Mammary epithelial cell (primary cell): ENCODE measurements at regions of chr18 and their contacts with region 1.

Region 1: DNA sequence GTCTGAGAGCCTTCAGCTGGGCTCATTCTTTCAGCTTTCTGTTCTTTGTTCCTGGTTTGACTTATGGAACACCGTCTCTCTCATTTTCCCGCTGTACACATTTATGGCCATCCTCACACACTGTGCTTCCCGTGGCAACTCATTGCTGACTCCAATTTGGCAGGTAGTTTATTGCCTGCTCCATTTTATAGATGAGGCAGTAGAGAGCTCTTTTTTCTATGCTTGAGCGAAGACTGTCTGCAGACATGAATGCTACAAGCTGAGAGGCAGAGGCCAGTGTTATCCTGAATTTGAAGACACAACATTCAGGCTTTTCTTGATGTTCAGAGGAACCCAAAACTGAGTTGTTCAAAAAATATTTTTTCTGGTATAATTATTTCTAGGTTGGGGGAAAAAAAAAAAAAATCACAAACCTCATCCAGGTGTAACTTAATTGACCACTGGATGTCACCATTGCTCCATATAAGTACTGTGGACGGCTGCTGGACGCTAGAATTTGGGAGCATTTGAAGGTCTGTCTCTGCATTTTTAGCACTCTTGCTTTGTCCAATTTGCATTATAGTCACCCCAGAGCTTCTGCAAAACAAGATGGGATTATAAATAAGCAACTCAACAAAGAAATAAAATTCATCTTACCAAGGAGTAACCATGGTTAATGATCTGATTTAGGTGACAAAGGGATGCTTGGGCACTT is 83.5 kb downstream of the HRH4 start:
- DNase-seq: peak; percentile 38
- H3K4me3 ChIP-seq: no peak overlapping the region
- H3K27ac ChIP-seq: no peak overlapping the region
- H3K4me1 ChIP-seq: peaks cover 4% of the 10 kb centered on the region
- H3K27me3 ChIP-seq: no peaks in the 10 kb centered on the region
- CTCF ChIP-seq: peak; percentile 51 to 56

Region 2: GRCh38 chr18:24488824-24489493 is 55.0 kb before region 1 on chr18:
- CTCF ChIA-PET with region 1: no interaction called
- dilution Hi-C with region 1: no loop called
- in situ Hi-C with region 1: no loop called
- intact Hi-C with region 1: loop called (anchors 1 kb)
- DNase-seq: peak; percentile 16
- H3K4me3 ChIP-seq: no peak overlapping the region
- H3K27ac ChIP-seq: no peak overlapping the region
- H3K4me1 ChIP-seq: no peaks in the 10 kb centered on the region
- H3K27me3 ChIP-seq: peaks cover 2% of the 10 kb centered on the region
- CTCF ChIP-seq: peak; percentile 66 to 83

Region 3: DNA sequence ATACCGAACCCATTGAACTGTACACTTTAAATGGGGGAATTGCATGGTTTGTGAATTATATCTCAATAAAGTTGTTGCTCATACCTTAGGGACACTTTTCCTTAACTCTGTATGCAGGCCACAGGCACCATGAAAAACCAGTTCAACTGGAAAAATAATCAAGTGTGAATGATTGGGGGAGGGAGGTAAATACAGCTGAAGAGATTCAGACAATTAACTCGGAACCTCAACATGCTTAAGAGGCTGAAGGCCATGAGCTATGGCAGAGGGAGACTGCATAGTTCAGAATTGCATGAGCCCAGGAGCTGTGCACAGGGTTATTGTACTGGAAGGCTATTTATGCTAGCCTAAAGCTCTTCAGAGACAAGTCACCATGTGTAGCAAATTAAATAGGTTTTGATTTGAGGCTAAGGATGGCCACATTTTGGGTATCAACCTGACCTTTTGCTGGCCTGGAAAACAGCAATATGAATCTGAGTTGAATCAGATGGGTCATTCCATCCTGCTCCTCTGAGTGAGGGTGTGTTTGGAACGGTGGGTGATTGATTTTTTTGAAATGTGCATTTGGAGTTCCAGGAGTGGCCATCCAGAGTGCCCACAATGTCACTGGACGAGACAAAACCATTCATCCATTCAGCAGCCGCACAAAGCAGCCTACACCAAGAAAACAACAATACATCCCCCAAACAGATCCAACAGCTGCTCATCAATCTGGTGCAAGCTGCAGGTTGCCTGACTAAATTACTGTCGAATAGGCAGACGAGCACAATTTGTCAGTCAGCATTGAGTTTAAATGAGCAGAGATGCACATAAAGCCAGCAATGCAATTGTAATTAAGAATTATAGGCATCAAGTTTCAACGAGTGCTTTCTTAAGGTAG is 41.1 kb before region 1 on chr18:
- CTCF ChIA-PET with region 1: no interaction called
- dilution Hi-C with region 1: no loop called
- in situ Hi-C with region 1: no loop called
- intact Hi-C with region 1: no loop called
- DNase-seq: no peak
- H3K4me3 ChIP-seq: no peak overlapping the region
- H3K27ac ChIP-seq: no peak overlapping the region
- H3K4me1 ChIP-seq: no peaks in the 10 kb centered on the region
- H3K27me3 ChIP-seq: no peaks in the 10 kb centered on the region
- CTCF ChIP-seq: no peak

Region 4: DNA sequence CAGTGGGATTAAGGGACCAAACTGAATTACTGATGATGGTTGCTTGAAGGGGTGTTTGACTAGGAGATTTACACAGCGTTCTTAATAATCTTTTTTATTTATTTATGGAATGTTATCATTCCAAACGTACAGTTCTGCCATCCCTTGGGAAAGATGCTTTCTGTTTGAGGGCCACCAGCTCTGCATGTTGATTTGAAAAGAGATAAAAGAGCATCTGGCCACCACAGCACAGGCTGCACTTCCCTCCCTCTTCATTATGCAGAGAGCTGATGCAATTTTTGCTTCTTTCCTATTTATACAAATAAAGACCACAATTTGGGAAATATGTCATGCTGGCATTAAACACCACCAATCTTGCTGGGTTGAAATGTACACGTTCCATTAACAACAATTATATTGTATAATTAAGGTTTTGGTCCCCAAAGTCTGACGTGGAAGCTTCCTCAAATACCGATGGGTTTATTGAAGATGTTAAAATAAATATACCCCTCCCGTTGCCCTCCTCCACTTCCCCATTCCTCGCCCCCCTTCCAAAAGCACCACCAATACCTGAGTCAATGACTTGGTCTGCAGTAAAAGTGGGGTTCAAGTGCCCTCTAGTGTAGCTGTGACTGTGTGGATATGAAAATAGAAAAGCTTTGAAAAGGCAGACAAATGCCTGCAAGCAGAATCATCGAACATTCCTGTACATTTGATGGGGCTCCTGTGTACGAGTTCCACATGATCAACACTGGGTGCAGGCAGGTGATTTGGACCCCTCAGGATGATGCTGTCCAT is 128.4 kb after region 1 on chr18:
- CTCF ChIA-PET with region 1: no interaction called
- dilution Hi-C with region 1: no loop called
- in situ Hi-C with region 1: no loop called
- intact Hi-C with region 1: loop called (anchors 5 kb)
- DNase-seq: no peak
- H3K4me3 ChIP-seq: no peak overlapping the region
- H3K27ac ChIP-seq: no peak overlapping the region
- H3K4me1 ChIP-seq: no peaks in the 10 kb centered on the region
- H3K27me3 ChIP-seq: no peaks in the 10 kb centered on the region
- CTCF ChIP-seq: peak in 1 of 2 donors; percentile 14

Region 5: GRCh38 chr18:24734058-24734457 is 190.1 kb after region 1 on chr18:
- CTCF ChIA-PET with region 1: interaction called, 7 read pairs
- dilution Hi-C with region 1: no loop called
- in situ Hi-C with region 1: loop called (anchors 5 to 10 kb)
- intact Hi-C with region 1: loop called (anchors 2 kb)
- DNase-seq: peak; percentile 62
- H3K4me3 ChIP-seq: no peak overlapping the region
- H3K27ac ChIP-seq: no peak overlapping the region
- H3K4me1 ChIP-seq: peaks cover 56% of the 10 kb centered on the region
- H3K27me3 ChIP-seq: no peaks in the 10 kb centered on the region
- CTCF ChIP-seq: peak; percentile 54 to 58

Region 6: GRCh38 chr18:25832001-25832604 is 1288.2 kb after region 1 on chr18:
- CTCF ChIA-PET with region 1: no interaction called
- dilution Hi-C with region 1: no loop called
- in situ Hi-C with region 1: no loop called
- intact Hi-C with region 1: loop called (anchors 2 kb)
- DNase-seq: peak; percentile 33
- H3K4me3 ChIP-seq: no peak overlapping the region
- H3K27ac ChIP-seq: no peak overlapping the region
- H3K4me1 ChIP-seq: peaks cover 17% of the 10 kb centered on the region
- H3K27me3 ChIP-seq: no peaks in the 10 kb centered on the region
- CTCF ChIP-seq: peak; percentile 83 to 87

Region 7: DNA sequence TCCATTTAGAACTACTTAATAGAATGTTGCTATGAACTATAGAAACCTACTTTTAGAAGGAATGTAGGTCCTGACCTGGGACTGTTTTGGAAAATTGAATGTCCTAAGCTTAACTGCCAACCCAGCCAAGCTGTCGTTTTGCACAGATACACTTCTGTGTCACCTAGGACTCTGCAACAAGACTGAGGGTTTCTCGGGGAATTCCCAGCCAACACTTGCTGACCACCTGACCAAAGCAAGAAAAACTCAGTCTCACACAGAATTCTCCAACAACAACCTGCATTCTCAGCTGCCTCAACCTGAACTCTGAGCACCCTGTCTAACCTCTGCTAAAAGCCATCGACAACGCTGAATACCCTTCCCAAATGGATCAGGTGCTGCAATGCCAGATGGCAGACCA is 1418.2 kb after region 1 on chr18:
- CTCF ChIA-PET with region 1: interaction called, 14 read pairs
- dilution Hi-C with region 1: no loop called
- in situ Hi-C with region 1: no loop called
- intact Hi-C with region 1: no loop called
- DNase-seq: no peak
- H3K4me3 ChIP-seq: no peak overlapping the region
- H3K27ac ChIP-seq: no peak overlapping the region
- H3K4me1 ChIP-seq: no peaks in the 10 kb centered on the region
- H3K27me3 ChIP-seq: peaks cover 6% of the 10 kb centered on the region
- CTCF ChIP-seq: no peak